Common myeloid progenitor, CD34-positive (primary cell): ENCODE measurements at regions of chr20 and their contacts with region 1.

Region 1: GRCh38 chr20:63973636-63974402 is 4.1 kb upstream of the ZNF512B start:
- DNase-seq: peak; percentile 74 to 86 (median 83)
- H3K4me3 ChIP-seq: peak overlapping the region in 3 of 7 experiments; percentile 16 to 52 (median 19)
- H3K27ac ChIP-seq: no peak overlapping the region
- H3K4me1 ChIP-seq: peaks cover 0 to 43% (median 37%) of the 10 kb centered on the region in 4 experiments
- H3K27me3 ChIP-seq: no peaks in the 10 kb centered on the region

Region 2: DNA sequence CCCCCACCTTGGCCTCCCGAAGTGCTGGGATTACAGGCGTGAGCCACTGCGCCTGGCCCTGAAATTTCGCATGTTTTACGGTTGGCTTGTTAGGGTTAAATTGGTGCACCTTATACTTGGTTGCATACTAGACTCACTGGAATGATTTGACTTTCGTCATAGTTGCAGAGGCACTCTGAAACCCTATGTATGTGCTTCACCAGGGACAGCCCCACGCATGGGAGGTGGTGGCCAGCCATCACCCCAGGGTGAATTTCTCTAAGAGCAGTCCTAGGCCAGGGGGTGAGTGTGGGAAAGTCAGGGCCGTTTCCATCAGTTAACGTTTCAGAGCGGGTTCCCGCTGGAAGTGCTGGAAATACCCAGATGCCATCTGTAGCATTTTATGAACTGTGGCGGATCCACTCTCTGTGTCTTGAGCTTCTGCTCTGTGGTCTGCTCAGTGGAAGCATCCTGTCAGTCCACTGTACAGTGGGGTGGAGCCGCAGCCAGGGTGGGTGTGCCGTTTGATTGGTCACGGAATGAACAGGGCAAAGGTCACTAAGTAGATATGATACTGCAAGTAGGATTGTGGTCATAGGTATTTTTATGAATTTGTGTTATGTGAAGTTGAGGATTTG is 65.7 kb before region 1 on chr20:
- CTCF ChIA-PET with region 1: interaction called, 21 read pairs
- POLR2A ChIA-PET with region 1: no interaction called
- DNase-seq: no peak
- H3K4me3 ChIP-seq: no peak overlapping the region
- H3K27ac ChIP-seq: no peak overlapping the region
- H3K4me1 ChIP-seq: peaks cover 0 to 12% (median 6%) of the 10 kb centered on the region in 4 experiments
- H3K27me3 ChIP-seq: no peaks in the 10 kb centered on the region

Region 3: DNA sequence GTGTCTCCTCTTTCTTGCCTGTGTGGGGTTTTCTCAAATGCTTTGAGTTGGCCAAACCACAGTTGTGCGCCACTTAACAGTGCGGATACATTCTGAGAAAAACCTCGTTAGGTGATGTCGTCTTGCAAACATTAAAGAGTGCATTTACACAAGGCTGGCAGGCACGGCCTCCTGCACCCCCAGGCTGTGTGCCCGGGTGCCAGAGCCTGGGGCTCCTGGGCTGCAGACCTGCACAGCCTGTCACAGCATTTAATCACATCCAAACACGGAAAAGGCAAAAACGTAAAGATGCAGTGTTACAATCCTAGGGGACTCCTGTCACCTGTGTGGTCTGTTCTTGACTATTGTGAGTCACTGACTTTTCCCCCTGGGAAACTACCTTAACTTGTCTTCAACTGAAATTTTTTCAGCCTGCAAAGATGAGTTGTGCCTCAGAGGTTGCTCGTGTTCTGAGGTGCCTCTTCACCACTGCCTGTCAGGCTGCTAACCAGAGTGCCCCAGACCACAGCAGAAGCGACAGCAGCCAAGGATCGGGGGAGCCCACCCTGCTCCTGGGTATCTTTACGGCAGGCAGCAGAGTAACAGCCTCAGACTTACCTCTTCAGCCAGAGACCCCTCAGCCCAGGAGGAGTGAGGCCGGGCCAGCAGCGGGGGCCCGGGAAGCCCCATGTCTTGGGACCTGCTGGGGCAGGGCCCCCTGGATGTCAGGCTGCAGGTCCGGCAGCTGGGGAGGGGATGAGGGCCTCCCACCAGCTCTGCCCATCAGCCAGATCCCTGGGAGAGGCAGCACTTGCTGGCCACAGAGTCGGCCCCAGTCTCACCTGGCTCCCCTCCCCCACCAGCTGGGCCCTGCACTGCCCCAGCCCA is 61.5 kb after region 1 on chr20:
- CTCF ChIA-PET with region 1: no interaction called
- POLR2A ChIA-PET with region 1: no interaction called
- DNase-seq: no peak
- H3K4me3 ChIP-seq: no peak overlapping the region
- H3K27ac ChIP-seq: no peak overlapping the region
- H3K4me1 ChIP-seq: peaks cover 6 to 47% (median 40%) of the 10 kb centered on the region in 4 experiments
- H3K27me3 ChIP-seq: peaks cover 0 to 8% (median 2%) of the 10 kb centered on the region in 5 experiments